ENCODE measurements at regions of chr16 and their contacts with region 1.

Region 1: DNA sequence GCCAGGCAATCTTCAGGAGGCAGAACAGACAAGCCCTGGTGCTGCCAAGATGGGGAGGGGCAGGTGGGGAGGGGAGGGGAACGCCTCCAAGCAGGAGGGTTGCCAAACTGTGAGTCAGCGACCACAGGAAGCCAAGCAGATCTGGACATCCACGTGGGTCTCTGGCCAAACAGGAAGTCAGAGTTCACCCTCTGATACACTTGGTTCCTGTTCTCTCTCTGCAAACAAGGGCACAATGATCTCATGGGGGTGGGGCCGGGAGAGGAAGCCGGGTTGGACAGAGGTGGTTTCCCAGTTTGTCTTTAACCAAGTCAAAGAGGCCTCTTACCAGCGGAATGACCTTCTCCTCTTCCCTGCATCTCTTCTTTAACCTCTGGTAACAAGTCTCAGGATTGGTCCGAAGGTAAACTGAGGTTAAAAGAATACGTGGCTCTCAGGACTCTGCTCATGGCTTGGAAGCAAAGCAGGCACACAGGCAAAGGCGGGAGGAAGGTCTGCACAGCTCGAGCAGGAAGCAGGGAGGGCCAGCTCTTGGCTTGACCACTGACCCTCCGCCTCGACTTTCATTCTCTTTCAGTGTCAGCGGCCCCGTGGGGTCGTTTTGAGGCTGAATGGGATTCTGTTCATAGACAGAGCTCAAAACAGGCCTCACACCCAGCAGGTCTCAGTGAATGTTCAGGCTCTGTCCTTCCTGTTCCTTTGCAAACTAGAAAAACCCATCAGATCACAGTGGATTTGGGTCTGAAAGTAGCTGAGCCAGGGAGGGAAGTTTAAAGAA is 32.9 kb downstream of the TK2 start:
- DNase-seq: peak; percentile 98
- H3K4me3 Mint-ChIP-seq: peak overlapping the region; percentile 60
- H3K27ac Mint-ChIP-seq: peak overlapping the region; percentile 99
- H3K4me1 Mint-ChIP-seq: peaks cover 82% of the 10 kb centered on the region
- H3K27me3 Mint-ChIP-seq: no peaks in the 10 kb centered on the region
- CTCF ChIP-seq: no peak

Region 2: GRCh38 chr16:66483689-66484481 is 33.1 kb before region 1 on chr16:
- CTCF ChIA-PET with region 1: interaction called, 3 read pairs
- intact Hi-C with region 1: loop called (anchors 1 kb)
- DNase-seq: peak; percentile 93
- H3K4me3 Mint-ChIP-seq: no peak overlapping the region
- H3K27ac Mint-ChIP-seq: peak overlapping the region; percentile 25
- H3K4me1 Mint-ChIP-seq: peaks cover 36% of the 10 kb centered on the region
- H3K27me3 Mint-ChIP-seq: no peaks in the 10 kb centered on the region
- CTCF ChIP-seq: peak; percentile 96

Region 3: GRCh38 chr16:66552286-66553177 is 35.5 kb after region 1 on chr16 and contains the start of gene CKLF:
- CTCF ChIA-PET with region 1: interaction called, 20 read pairs
- intact Hi-C with region 1: loop called (anchors 2 kb)
- DNase-seq: peak; percentile 95
- H3K4me3 Mint-ChIP-seq: peak within 1 kb of the TSS; percentile 92
- H3K27ac Mint-ChIP-seq: peak within 1 kb of the TSS; percentile 96
- H3K4me1 Mint-ChIP-seq: peaks cover 65% of the 10 kb centered on the region
- H3K27me3 Mint-ChIP-seq: no peaks in the 10 kb centered on the region
- CTCF ChIP-seq: no peak
- total RNA-seq, gene CKLF: 217 and 293 TPM in 2 replicates

Region 4: DNA sequence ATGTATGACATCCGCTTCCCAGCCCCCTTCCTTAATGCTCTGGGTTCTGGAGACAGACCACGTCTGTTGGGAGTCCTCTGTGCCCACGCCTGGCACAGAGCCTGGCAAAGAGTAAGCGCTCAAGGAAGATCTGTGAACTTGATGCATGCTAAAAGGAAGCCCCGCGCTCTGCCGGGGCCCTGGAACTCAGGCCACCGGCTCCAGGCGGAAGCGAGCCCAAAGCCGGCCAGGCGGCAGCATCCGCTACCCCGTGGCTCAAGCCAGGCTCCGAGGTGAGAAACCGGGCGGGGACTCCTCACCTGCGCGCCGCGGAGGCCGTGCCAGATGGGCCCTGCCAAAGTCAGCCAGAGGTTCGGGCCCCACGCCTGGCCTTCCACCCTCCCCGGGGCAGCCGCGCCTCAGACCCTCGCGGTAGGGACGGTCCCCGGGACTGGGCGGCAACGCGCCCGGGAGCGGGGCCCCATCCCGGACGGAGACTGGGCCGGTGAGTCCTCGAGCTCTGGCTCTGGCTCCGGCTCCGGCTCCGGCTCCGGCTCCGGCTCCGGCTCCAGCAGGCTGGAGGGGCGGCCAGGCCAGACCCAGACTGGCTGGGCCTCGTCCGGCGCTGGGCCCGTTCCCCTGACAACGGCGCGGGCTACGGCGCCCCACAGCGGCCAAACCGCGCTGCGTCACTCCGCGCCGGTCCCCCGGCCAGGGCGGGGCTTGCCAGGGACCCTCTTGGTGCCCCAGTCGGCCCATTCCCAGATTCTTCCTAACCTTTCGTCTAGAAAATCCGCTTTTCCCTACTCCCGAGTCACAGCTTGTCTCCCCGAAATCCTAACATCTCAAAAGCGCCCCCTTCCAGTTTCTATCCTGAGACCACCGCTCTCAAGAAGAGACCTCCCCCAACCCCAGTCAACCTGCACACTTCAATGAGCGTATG is 899.1 kb after region 1 on chr16 and contains the start of gene ZDHHC1:
- CTCF ChIA-PET with region 1: no interaction called
- intact Hi-C with region 1: no loop called
- DNase-seq: peak; percentile 92
- H3K4me3 Mint-ChIP-seq: peak within 1 kb of the TSS; percentile 75
- H3K27ac Mint-ChIP-seq: peak within 1 kb of the TSS; percentile 66
- H3K4me1 Mint-ChIP-seq: peaks cover 42% of the 10 kb centered on the region
- H3K27me3 Mint-ChIP-seq: peaks cover 15% of the 10 kb centered on the region
- CTCF ChIP-seq: peak; percentile 80
- total RNA-seq, gene ZDHHC1: 22.6 and 24.4 TPM in 2 replicates